HEK293T (cell line): ENCODE measurements at regions of chr22 and their contacts with region 1.

Region 1: DNA sequence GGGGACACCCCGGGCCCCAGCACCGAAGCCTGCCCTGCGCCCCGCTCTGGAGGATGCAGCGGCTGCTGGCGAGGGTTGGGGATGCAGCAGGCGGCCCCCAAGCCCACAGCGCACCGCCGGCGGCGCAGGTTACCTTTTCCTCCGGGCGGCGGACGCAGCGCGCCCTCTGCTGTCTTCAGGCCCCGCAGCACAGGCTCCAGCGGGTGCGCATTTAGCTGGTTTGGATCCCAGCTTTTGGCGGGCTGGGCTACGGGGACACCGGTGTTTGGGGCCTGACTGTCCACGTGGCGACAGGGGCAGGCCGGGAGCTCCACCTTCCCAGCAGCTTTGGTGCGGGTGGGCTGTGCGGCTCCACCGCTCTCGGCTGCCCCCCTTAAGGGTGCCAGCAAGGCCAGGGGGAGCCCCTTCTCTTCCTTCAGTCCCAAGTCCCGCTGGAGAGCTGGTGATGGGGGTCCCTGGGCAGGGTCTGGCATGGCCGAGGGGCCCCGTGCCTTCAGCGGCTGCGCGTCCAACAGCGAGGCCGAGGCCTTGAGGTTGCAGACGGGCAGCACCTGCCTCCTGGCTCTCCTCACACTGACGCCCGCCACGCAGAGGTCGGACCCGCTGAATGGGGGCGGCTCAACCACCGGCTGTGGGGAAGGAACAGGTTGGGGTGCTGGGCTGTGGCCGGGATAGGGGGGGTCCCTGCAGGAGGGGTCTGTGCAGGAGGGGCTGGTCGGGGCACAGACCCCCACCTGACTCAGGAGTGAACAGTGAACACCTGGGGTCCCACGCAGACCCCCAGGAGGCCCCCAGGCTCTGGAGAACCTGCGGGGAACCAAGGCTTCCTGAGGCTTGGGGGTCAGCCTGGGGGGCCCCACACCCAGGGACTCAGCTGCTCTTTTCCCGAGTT is 18.0 kb upstream of the IL17REL start:
- DNase-seq: peak; percentile 82

Region 2: DNA sequence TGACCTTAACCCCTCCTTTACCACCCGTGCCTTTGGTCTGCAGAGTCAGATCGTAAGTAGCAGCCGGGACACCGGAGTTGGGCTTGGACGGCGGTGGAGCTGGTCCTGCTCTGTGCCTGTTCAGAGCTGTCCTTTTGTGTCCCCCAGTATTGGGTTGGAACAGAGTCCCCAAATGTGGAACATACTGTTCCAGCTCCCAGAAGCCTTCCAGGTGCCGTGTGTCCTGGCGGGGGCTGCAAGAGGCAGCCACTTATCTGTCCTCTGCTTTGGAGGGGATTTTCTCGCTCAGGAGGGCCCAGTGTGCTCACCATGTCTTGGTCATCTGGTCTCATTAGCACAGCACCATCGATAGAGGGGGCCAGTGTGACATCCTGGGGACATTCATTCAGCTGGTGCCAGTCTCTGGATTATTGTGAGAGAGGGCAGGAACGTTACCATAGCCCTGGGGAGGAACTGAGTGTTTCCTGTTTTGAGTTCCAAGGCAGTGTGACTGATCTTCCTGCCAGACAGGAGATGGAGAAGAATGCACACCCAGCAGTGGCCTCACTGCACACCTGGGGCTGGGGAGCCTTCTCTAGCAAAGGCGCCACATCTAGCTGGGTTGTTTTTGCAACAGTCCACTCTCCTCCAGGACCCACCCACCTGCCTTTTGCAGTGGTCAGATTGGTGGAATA is 99.7 kb before region 1 on chr22:
- CTCF ChIA-PET with region 1: interaction called, 43 read pairs
- POLR2A ChIA-PET with region 1: interaction called, 5 read pairs
- DNase-seq: peak; percentile 36

Region 3: DNA sequence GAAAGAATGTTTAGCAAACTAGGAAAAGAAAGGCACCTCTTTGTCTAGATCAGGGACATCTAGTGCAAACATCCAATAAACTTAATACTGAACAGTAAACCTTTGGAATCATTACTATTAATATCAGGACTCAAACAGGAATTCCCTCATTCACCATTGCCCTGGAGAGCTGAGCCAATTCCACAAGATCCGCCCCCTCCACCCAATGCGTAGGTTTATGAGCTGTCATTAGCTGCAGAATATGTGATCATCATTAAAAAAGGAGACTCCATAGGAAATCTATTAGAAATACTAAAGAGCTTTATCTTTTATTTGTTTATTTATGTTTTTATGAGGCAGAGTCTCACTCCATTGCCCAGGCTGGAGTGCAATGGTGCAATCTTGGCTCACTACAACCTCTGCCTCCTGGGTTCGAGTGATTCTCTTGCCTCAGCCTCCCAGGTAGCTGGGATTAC is 23.5 kb before region 1 on chr22:
- CTCF ChIA-PET with region 1: no interaction called
- POLR2A ChIA-PET with region 1: no interaction called
- DNase-seq: no peak

Region 4: GRCh38 chr22:50118557-50119168 is 88.1 kb after region 1 on chr22:
- CTCF ChIA-PET with region 1: no interaction called
- POLR2A ChIA-PET with region 1: no interaction called
- DNase-seq: no peak

Region 5: GRCh38 chr22:50173311-50173982 is 142.9 kb after region 1 on chr22:
- CTCF ChIA-PET with region 1: no interaction called
- POLR2A ChIA-PET with region 1: no interaction called
- DNase-seq: no peak